SK-N-SH (cell line): ENCODE measurements at regions of chr7 and their contacts with region 1.

Region 1: DNA sequence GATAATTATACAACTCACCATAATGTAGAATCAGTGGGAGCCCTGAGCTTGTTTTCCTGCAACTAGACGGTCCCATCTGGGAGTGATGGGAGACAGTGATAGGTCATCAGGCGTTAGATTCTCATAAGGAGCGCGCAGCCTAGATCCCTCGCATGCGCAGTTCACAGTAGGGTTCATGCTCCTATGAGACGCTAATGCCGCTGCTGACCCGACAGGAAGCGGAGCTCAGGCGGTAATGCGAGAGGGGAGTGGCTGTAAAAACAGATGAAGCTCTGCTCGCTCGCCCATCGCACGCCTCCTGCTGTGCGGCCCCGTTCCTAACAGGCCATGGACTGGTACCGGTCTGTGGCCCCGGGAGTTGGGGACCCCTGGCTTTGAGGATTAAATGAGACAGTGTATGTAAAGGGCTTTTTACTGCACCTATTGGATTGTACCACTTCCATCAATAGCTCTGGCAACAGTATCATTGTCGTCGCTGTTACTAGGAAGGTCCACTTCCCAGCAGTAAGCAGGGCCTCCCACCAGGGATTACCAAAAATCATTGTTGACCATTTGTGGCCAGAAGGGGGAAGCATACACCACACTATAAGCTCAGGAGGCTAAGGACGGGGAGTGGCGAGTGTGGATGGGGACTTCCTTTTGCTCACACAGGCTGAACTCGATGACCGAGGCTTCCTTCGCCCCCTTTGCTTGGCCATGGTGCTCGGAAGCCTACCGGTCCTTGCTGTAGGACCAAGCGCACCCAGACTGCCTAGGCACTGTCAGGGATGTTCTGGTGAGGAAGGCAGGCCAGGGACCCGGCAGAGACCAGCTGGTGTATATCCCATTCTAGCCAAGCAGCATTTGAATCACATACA is 26.4 kb downstream of the AKR1B1 start:
- DNase-seq: peak; percentile 92
- H3K4me3 ChIP-seq: peak overlapping the region; percentile 54 to 64
- H3K27ac ChIP-seq: peak overlapping the region; percentile 89 to 93
- H3K4me1 ChIP-seq: peaks cover 0 to 16% of the 10 kb centered on the region in 2 experiments; a peak in 1 of 4 replicates
- H3K27me3 ChIP-seq: no peaks in the 10 kb centered on the region
- CTCF ChIP-seq: peak; percentile 97
- EP300 ChIP-seq: 0 out of 4 replicates have a peak, but pooled peaks of 1 of the 2 experiments have one; percentile 23
- RAD21 ChIP-seq: peak; percentile 99

Region 2: DNA sequence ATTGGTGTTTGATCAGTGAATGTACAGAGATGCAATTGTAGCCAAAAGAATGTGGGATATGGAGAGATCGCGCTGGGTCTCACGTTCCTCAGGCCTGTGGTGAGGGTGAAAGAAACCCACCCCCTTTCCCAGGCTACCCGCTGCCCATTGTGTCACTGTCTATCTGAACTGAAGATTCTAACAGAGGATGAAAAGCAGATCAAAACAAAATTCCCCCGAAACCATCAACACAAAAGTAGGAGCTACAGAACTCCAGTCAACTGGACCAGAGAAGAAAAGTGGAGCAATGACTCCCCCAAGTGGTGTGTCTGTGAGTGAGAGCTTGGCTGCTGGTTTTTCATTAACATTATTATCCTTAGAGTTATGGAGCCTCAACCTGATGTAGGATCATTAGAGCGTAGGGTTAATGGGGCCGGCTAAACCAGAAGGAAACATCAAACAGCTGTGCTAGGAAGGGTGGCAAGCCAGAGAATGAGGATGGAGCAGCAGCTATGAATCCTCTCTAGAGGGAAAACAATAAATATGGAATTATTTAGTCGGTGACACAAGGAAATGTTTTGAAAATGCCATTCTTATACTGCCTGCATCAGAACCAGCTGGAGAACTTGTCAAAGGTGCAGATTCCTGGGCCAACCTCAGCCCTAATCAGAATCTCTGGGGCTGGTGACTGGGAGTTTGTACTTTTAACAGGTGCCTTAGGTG is 11.9 kb before region 1 on chr7:
- CTCF ChIA-PET with region 1: interaction called, 36 read pairs
- POLR2A ChIA-PET with region 1: interaction called, 4 read pairs
- DNase-seq: peak; percentile 77
- H3K4me3 ChIP-seq: peak overlapping the region in 1 of 2 experiments; percentile 19; a peak in 1 of 4 replicates
- H3K27ac ChIP-seq: peak overlapping the region in 1 of 2 experiments; percentile 30; a peak in 2 of 4 replicates
- H3K4me1 ChIP-seq: peaks cover 0 to 7% of the 10 kb centered on the region in 2 experiments; a peak in 1 of 4 replicates
- H3K27me3 ChIP-seq: no peaks in the 10 kb centered on the region
- CTCF ChIP-seq: peak; percentile 86
- EP300 ChIP-seq: peak in 1 of 2 experiments; percentile 47; a peak in 2 of 4 replicates
- RAD21 ChIP-seq: peak; percentile 95

Region 3: DNA sequence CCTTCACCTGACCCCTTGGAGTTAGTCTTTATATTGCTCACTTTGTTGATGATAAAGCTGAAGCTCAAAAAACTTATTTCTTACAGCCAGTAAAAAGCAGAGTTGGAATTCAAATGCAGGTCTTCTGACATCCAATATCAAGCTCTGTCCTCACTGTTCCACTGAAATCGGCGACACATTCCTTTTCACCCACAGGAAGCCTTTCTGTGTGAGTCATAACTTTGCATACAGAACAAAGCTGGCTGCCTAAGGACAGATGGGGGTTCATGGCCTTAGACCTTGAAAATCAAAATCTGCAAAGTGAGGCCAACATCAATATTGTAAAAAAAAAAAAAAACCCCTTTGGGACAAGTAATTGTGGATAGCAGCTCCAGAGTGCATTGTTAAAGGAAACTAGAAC is 48.2 kb after region 1 on chr7:
- CTCF ChIA-PET with region 1: interaction called, 20 read pairs
- POLR2A ChIA-PET with region 1: no interaction called
- DNase-seq: no peak
- H3K4me3 ChIP-seq: no peak overlapping the region
- H3K27ac ChIP-seq: no peak overlapping the region
- H3K4me1 ChIP-seq: peaks cover 0 to 7% of the 10 kb centered on the region in 2 experiments; a peak in 2 of 4 replicates
- H3K27me3 ChIP-seq: no peaks in the 10 kb centered on the region; the same call in 1 of the 2 replicates
- CTCF ChIP-seq: no peak
- EP300 ChIP-seq: no peak
- RAD21 ChIP-seq: no peak

Region 4: DNA sequence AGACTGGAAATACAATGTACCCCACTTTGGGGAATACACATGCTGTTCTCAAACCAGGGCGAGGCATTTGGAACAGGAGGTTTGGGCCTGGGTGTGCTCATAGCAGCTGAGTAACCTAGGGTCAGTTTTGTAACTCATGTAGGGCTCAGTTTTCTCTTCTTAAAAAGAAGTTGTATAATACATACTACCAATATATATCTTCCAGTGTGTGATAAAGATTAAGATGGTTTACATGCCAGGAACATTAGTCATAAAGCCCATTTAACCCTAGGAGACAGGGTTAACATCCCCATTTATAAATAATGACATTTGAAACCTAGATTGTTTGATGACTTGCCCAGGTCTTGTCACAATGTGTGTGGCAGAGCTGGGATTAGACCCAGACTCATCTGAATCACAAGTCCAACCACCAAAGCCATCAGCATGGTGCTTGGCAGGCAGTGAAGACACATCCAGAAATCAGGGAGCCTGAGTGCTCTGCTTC is 100.8 kb after region 1 on chr7:
- CTCF ChIA-PET with region 1: interaction called, 13 read pairs
- POLR2A ChIA-PET with region 1: interaction called, 4 read pairs
- DNase-seq: no peak
- H3K4me3 ChIP-seq: no peak overlapping the region
- H3K27ac ChIP-seq: no peak overlapping the region
- H3K4me1 ChIP-seq: no peaks in the 10 kb centered on the region
- H3K27me3 ChIP-seq: peaks cover 25% of the 10 kb centered on the region; the same call in 1 of the 2 replicates
- CTCF ChIP-seq: no peak
- EP300 ChIP-seq: no peak
- RAD21 ChIP-seq: no peak

Region 5: DNA sequence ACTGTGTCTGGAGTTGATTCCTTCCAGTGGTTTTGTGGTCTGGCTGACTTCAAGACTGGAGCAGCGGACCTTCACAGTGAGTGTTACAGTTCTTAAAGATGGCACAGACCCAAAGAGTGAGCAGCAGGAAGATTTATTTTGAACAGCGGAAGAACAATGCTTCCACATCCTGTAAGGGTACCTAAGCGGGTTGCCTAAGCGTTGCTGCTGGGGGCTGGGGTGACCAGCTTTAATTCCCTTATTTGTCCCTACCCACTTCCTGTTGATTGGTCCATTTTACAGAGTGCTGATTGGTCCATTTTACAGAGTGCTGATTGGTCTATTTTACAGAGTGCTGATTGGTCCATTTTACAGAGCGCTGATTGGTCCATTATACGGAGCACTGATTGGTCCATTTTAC is 129.6 kb after region 1 on chr7:
- CTCF ChIA-PET with region 1: interaction called, 15 read pairs
- POLR2A ChIA-PET with region 1: no interaction called
- DNase-seq: no peak
- H3K4me3 ChIP-seq: no peak overlapping the region
- H3K27ac ChIP-seq: no peak overlapping the region
- H3K4me1 ChIP-seq: peaks cover 0 to 2% of the 10 kb centered on the region in 2 experiments; a peak in 1 of 4 replicates
- H3K27me3 ChIP-seq: peaks cover 8% of the 10 kb centered on the region; the same call in 1 of the 2 replicates
- CTCF ChIP-seq: no peak
- EP300 ChIP-seq: no peak
- RAD21 ChIP-seq: no peak

Region 6: DNA sequence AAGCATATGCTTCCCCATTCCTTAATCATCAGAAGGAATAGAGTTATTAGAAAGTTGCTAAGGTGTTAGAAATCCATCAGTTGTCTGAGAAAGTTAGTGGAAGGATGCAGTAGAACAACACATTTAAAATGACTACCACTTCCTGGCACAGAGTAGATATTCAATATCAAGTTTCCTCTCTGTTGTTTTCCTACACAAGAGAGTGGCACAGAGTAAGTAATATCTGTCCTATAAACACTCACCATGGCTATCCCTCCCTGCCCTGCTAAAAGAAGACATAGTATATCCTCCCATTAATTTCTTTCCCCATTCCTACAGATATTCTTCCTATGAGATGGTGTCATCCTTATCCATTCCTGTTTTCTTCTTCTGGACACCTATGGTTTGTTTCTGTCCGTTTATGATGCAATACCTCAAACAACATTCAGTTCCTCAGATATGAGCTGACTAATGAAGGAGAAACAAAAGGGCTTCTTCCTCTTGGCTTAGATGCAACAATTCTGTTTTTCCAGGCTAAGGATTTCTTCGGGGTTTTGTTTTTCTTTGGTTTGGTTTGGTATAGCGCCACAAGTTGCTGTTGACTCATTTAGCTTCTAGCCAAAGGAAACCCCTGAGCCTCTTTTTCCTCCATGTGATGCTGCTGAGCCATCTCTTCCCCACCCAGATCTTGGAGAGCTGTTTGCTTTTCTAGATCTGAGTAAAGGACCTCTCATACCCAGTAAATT is 181.3 kb after region 1 on chr7:
- CTCF ChIA-PET with region 1: interaction called, 87 read pairs
- POLR2A ChIA-PET with region 1: interaction called, 4 read pairs
- DNase-seq: no peak
- H3K4me3 ChIP-seq: no peak overlapping the region; a peak in 1 of 4 replicates
- H3K27ac ChIP-seq: peak overlapping the region in 1 of 2 experiments; percentile 98; a peak in 2 of 4 replicates
- H3K4me1 ChIP-seq: peaks cover 0 to 21% of the 10 kb centered on the region in 2 experiments; a peak in 2 of 4 replicates
- H3K27me3 ChIP-seq: no peaks in the 10 kb centered on the region
- CTCF ChIP-seq: peak; percentile 26
- EP300 ChIP-seq: peak in 1 of 2 experiments; percentile 80; a peak in 2 of 4 replicates
- RAD21 ChIP-seq: no peak